ENCODE measurements at regions of chr2 and their contacts with region 1.

Region 1: GRCh38 chr2:173027181-173028128 is 48.2 kb upstream of the MAP3K20 start:
- DNase-seq: peak; percentile 94
- H3K4me3 ChIP-seq: peak overlapping the region in 1 of 4 donors; percentile 4
- H3K27ac ChIP-seq: peak overlapping the region; percentile 62 to 83 (median 77)
- H3K4me1 ChIP-seq: peaks cover 0 to 33% (median 25%) of the 10 kb centered on the region in 4 donors
- H3K27me3 ChIP-seq: no peaks in the 10 kb centered on the region
- CTCF ChIP-seq: peak; percentile 89 to 97 (median 92)
- EP300 ChIP-seq: no peak
- POLR2A ChIP-seq: no peak

Region 2: GRCh38 chr2:173075781-173076580 is 48.5 kb after region 1 on chr2 and contains the start of gene MAP3K20:
- intact Hi-C with region 1: loop called (anchors 2 kb)
- DNase-seq: peak; percentile 92
- H3K4me3 ChIP-seq: peak within 1 kb of the TSS; percentile 54 to 92 (median 76)
- H3K27ac ChIP-seq: peak within 1 kb of the TSS; percentile 91 to 99 (median 96)
- H3K4me1 ChIP-seq: peaks cover 0 to 53% (median 40%) of the 10 kb centered on the region in 4 donors
- H3K27me3 ChIP-seq: no peaks in the 10 kb centered on the region
- CTCF ChIP-seq: peak in 1 of 4 experiments; percentile 44
- EP300 ChIP-seq: no peak
- POLR2A ChIP-seq: peak in 1 of 2 donors; percentile 14
- total RNA-seq, gene MAP3K20: 189 to 255 (median 219) TPM

Region 3: GRCh38 chr2:173354601-173355131 is 327.2 kb after region 1 on chr2 and contains the start of gene CDCA7:
- intact Hi-C with region 1: loop called (anchors 10 kb)
- DNase-seq: peak; percentile 69
- H3K4me3 ChIP-seq: peak within 1 kb of the TSS; percentile 41 to 59 (median 50)
- H3K27ac ChIP-seq: peak within 1 kb of the TSS in 2 of 4 donors; percentile 32 to 38
- H3K4me1 ChIP-seq: peaks cover 0 to 23% (median 21%) of the 10 kb centered on the region in 4 donors
- H3K27me3 ChIP-seq: peaks cover 7 to 65% (median 36%) of the 10 kb centered on the region in 3 donors
- CTCF ChIP-seq: no peak
- EP300 ChIP-seq: no peak
- POLR2A ChIP-seq: no peak
- total RNA-seq, gene CDCA7: 0.33 to 1.7 (median 0.41) TPM in 3 of 4 donors, not detected in the other

Region 4: GRCh38 chr2:173448938-173449471 is 421.6 kb after region 1 on chr2:
- intact Hi-C with region 1: loop called (anchors 5 kb)
- DNase-seq: peak; percentile 89
- H3K4me3 ChIP-seq: peak overlapping the region; percentile 1 to 41 (median 26)
- H3K27ac ChIP-seq: peak overlapping the region in 2 of 4 donors; percentile 43 to 63
- H3K4me1 ChIP-seq: peaks cover 0 to 4% (median 0%) of the 10 kb centered on the region in 4 donors
- H3K27me3 ChIP-seq: no peaks in the 10 kb centered on the region
- CTCF ChIP-seq: peak in 3 of 4 experiments; percentile 34 to 75 (median 52)
- EP300 ChIP-seq: no peak
- POLR2A ChIP-seq: no peak